ENCODE measurements at regions of chrX and their contacts with region 1.

Region 1: DNA sequence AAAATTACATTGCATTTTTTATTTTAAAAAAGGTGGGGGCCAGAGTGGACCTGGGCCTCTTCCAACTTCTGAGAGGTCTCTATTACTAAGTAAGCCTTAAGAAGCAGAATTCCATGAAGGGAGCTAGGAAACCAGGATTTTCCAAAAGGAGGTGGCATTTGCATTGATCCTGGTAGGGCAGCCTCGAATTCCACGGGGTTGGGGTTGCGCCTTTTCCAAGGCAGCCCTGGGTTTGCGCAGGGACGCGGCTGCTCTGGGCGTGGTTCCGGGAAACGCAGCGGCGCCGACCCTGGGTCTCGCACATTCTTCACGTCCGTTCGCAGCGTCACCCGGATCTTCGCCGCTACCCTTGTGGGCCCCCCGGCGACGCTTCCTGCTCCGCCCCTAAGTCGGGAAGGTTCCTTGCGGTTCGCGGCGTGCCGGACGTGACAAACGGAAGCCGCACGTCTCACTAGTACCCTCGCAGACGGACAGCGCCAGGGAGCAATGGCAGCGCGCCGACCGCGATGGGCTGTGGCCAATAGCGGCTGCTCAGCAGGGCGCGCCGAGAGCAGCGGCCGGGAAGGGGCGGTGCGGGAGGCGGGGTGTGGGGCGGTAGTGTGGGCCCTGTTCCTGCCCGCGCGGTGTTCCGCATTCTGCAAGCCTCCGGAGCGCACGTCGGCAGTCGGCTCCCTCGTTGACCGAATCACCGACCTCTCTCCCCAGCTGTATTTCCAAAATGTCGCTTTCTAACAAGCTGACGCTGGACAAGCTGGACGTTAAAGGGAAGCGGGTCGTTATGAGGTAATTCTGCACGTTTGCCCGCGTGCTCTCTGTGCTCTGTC is at the start of gene PGK1:
- DNase-seq: peak; percentile 90 to 97
- H3K4me3 ChIP-seq: peak within 1 kb of the TSS; percentile 52 to 72
- H3K27ac ChIP-seq: peak within 1 kb of the TSS; percentile 83 to 94
- H3K4me1 ChIP-seq: peaks cover 0 to 4% of the 10 kb centered on the region in 2 donors
- H3K27me3 ChIP-seq: no peaks in the 10 kb centered on the region
- CTCF ChIP-seq: no peak
- total RNA-seq, gene PGK1: 72.1 TPM

Region 2: GRCh38 chrX:76427560-76428242 is 1676.1 kb before region 1 on chrX and contains the start of gene MAGEE1:
- intact Hi-C with region 1: loop called (anchors 10 kb)
- DNase-seq: peak; percentile 44 to 84
- H3K4me3 ChIP-seq: peak within 1 kb of the TSS; percentile 65 to 88
- H3K27ac ChIP-seq: peak within 1 kb of the TSS; percentile 53 to 56
- H3K4me1 ChIP-seq: no peaks in the 10 kb centered on the region
- H3K27me3 ChIP-seq: no peaks in the 10 kb centered on the region
- CTCF ChIP-seq: no peak
- total RNA-seq, gene MAGEE1: 4.5 TPM

Region 3: GRCh38 chrX:77785486-77786364 is 318.1 kb before region 1 on chrX and contains the start of gene ATRX:
- intact Hi-C with region 1: loop called (anchors 5 kb)
- DNase-seq: peak; percentile 15 to 84
- H3K4me3 ChIP-seq: peak within 1 kb of the TSS; percentile 60 to 82
- H3K27ac ChIP-seq: peak within 1 kb of the TSS; percentile 90 to 93
- H3K4me1 ChIP-seq: no peaks in the 10 kb centered on the region
- H3K27me3 ChIP-seq: no peaks in the 10 kb centered on the region
- CTCF ChIP-seq: no peak
- total RNA-seq, gene ATRX: 117 TPM

Region 4: DNA sequence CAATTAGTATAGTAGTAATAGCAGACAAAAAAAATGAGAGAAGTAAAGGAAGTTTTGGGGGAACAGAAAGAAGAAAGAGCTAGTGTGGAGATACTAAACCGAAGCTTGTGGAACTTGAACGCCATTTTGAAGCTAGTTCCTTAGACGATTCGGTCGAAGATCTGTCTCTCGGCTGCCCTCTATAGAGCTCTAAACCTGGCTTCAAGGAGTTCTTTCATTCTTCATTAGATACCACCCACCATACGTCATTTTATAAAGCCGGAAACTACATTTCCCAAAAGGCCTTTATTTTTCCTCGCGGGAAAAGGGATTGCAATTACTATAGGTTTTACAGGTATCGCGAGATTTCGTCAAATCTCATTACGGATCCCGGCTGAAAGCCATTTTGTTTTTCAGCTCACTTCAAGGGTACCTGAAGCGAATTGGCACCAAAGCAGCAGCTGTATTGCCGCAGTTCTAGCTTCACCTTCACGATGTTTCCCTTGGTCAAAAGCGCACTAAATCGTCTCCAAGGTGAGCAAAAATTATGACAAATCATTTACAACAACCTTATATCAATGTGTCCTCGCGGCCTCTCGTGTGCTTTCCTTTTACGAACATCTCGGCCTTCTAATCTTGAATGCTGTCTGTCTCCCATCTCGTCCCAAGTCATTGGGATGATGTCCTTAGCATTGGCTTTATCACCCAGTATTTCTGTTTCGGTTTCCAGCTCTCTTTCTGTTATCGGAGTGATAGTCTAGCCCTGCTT is 204.6 kb before region 1 on chrX and contains the start of gene COX7B:
- intact Hi-C with region 1: loop called (anchors 5 kb)
- DNase-seq: peak in 1 of 2 donors; percentile 82
- H3K4me3 ChIP-seq: peak within 1 kb of the TSS; percentile 60 to 69
- H3K27ac ChIP-seq: peak within 1 kb of the TSS; percentile 79 to 82
- H3K4me1 ChIP-seq: peaks cover 0 to 3% of the 10 kb centered on the region in 2 donors
- H3K27me3 ChIP-seq: no peaks in the 10 kb centered on the region
- CTCF ChIP-seq: peak in 2 of 3 experiments; percentile 22 to 40
- total RNA-seq, gene COX7B: 472 TPM

Region 5: DNA sequence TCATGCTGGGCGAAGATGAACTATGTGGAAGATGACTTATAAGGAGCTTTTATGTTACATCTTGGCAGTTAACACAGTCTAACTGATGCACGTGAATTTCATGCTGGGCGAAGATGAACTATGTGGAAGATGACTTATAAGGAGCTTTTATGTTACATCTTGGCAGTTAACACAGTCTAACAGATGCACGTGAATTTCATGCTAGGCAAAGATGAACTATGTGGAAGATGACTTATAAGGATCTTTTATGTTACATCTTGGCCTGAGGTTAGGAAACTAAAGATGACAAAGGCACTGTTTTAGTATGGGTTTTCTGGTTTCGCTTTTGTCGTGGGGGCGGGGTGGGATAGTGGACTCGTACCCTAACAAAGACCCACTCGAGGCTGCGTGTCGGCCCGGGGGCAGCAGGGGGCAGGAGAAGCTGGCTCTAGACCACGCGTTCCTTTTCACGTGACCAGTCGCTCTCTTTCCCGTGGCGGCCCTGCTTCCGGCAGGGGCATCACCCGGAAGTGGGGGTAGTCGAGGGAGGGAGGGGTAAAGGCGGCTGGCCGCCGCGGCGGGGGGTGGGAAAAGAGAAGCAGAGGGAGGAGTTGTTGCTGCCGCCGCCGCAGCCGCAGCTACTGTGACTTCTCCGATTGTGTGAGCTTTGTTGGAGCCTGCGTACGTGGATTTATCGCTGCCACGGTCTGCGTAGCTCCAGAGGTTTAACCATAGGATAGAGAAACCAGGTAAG is 193.6 kb before region 1 on chrX and contains the start of gene ATP7A:
- intact Hi-C with region 1: loop called (anchors 5 kb)
- DNase-seq: peak; percentile 70 to 94
- H3K4me3 ChIP-seq: peak within 1 kb of the TSS; percentile 47 to 67
- H3K27ac ChIP-seq: peak within 1 kb of the TSS; percentile 67 to 73
- H3K4me1 ChIP-seq: peaks cover 0 to 3% of the 10 kb centered on the region in 2 donors
- H3K27me3 ChIP-seq: no peaks in the 10 kb centered on the region
- CTCF ChIP-seq: peak; percentile 49 to 54 (median 51)
- total RNA-seq, gene ATP7A: 7.5 TPM

Region 6: DNA sequence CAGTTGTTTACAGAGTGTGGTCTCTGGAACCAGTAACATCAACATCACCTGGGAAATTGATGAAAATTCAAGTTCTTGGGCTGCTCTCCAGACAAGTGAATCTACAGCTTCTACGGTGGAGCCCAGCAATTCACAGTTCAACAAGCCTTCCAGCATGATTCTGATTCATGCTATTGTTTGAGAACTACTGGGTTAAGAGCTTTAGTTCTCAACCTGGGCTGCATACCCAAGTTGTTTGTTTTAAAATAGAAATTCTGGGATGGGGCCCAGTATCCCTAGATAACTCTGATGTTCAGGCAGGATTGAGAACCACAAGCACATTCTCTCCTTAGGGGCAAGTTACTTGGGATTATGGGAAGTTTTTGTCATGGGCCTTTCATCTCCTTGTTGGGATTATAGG is 37.7 kb before region 1 on chrX:
- intact Hi-C with region 1: loop called (anchors 5 kb)
- DNase-seq: no peak
- H3K4me3 ChIP-seq: no peak overlapping the region
- H3K27ac ChIP-seq: peak overlapping the region in 1 of 2 donors; percentile 71
- H3K4me1 ChIP-seq: no peaks in the 10 kb centered on the region
- H3K27me3 ChIP-seq: no peaks in the 10 kb centered on the region
- CTCF ChIP-seq: no peak

Region 7: GRCh38 chrX:78139160-78140123 is 35.6 kb after region 1 on chrX and contains the start of gene TAF9B:
- intact Hi-C with region 1: loop called (anchors 2 kb)
- DNase-seq: peak; percentile 46 to 90
- H3K4me3 ChIP-seq: peak within 1 kb of the TSS; percentile 42 to 68
- H3K27ac ChIP-seq: peak within 1 kb of the TSS; percentile 79 to 84
- H3K4me1 ChIP-seq: no peaks in the 10 kb centered on the region
- H3K27me3 ChIP-seq: no peaks in the 10 kb centered on the region
- CTCF ChIP-seq: no peak
- total RNA-seq, gene TAF9B: 7.9 TPM